ENCODE measurements at regions of chr1 and their contacts with region 1.

Region 1: DNA sequence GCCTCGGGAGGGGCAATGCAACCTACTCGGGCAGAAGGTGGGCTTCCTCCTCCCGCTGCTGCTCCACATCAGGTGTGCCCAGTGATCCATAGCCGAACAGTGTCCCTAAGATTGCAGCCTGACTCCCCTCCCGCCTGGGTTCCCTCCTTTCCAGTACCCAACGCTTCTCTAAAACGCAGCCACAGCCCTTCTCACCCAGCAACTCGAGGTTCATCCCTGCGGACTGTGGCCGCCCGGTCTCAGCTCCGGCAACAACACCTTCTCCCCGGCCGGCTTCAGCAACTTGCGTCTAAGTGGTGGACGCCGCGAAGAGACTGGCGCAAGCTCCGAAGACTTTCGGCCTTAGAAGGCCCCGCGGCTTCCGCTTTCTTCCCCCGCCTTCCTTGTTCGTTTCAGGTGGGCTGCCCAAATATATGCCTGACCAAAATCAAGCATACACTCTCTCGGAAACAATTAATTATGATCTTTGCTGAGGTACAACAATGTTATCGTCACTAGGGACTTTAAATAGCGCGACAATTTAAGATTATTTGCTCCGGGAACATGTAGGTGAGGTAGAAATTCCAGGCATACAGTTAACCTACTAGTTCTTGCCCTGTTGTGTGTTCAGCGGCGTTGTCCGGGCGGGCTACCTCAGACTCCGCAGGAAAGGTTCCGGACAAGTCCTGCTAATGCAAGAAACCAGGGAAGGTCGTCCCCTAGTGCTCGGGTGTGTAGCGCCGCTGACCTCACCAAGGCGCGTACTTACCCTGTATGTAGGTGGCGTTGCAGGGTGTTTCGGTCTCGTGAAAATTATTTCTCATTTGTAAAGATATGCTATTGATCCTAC is at the start of gene RBBP5:
- DNase-seq: peak; percentile 96
- H3K4me3 ChIP-seq: peak within 1 kb of the TSS; percentile 89 to 100 (median 97)
- H3K27ac ChIP-seq: peak within 1 kb of the TSS; percentile 98
- H3K4me1 ChIP-seq: peaks cover 0 to 9% (median 5%) of the 10 kb centered on the region in 4 experiments; a peak in 3 of 7 replicates
- H3K27me3 ChIP-seq: no peaks in the 10 kb centered on the region
- CTCF ChIP-seq: peak; percentile 85 to 91 (median 86)
- EP300 ChIP-seq: peak in 1 of 2 experiments; percentile 91; a peak in 1 of 3 replicates
- POLR2A ChIP-seq: peak; percentile 80 to 91
- RAD21 ChIP-seq: peak; percentile 55
- total RNA-seq, gene RBBP5: 20.4 and 21.5 TPM in 2 replicates

Region 2: GRCh38 chr1:205013683-205014367 is 108.0 kb before region 1 on chr1:
- CTCF ChIA-PET with region 1: no interaction called
- POLR2A ChIA-PET with region 1: no interaction called
- DNase-seq: no peak
- H3K4me3 ChIP-seq: no peak overlapping the region
- H3K27ac ChIP-seq: no peak overlapping the region
- H3K4me1 ChIP-seq: peaks cover 0 to 21% (median 7%) of the 10 kb centered on the region in 4 experiments; a peak in 5 of 7 replicates
- H3K27me3 ChIP-seq: no peaks in the 10 kb centered on the region
- CTCF ChIP-seq: no peak
- EP300 ChIP-seq: no peak
- POLR2A ChIP-seq: no peak
- RAD21 ChIP-seq: no peak

Region 3: GRCh38 chr1:205111354-205111753 is 10.5 kb before region 1 on chr1:
- CTCF ChIA-PET with region 1: interaction called, 4 read pairs
- POLR2A ChIA-PET with region 1: interaction called, 21 read pairs
- DNase-seq: no peak
- H3K4me3 ChIP-seq: no peak overlapping the region
- H3K27ac ChIP-seq: no peak overlapping the region
- H3K4me1 ChIP-seq: no peaks in the 10 kb centered on the region; a peak in 1 of 7 replicates
- H3K27me3 ChIP-seq: no peaks in the 10 kb centered on the region
- CTCF ChIP-seq: no peak
- EP300 ChIP-seq: no peak
- POLR2A ChIP-seq: no peak
- RAD21 ChIP-seq: no peak

Region 4: DNA sequence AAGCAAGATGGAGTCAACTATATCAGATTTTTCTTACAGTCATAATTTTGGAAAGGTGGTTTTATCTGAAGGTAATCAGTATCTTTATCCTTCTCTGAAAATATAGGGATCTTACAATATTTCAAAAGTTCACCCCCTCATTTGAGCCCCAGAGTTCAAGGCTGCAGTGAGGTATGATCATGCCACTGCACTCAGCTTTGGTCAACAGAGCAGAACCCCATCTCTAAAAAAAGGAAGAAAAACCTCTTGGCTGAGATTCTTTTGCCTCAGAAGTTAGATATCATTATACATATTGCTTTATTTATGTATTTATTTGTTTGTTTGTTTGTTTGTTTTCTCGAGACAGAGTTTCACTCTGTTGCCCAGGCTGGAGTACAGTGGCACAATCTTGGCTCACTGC is 11.4 kb after region 1 on chr1:
- CTCF ChIA-PET with region 1: interaction called, 46 read pairs
- POLR2A ChIA-PET with region 1: interaction called, 6 read pairs
- DNase-seq: no peak
- H3K4me3 ChIP-seq: no peak overlapping the region
- H3K27ac ChIP-seq: no peak overlapping the region
- H3K4me1 ChIP-seq: peaks cover 0 to under 1% (median 0%) of the 10 kb centered on the region in 4 experiments; a peak in 2 of 7 replicates
- H3K27me3 ChIP-seq: peaks cover 0 to 2% (median 0%) of the 10 kb centered on the region in 4 experiments; a peak in 1 of 7 replicates
- CTCF ChIP-seq: no peak
- EP300 ChIP-seq: no peak
- POLR2A ChIP-seq: no peak
- RAD21 ChIP-seq: no peak

Region 5: GRCh38 chr1:205141236-205142101 is 19.6 kb after region 1 on chr1:
- CTCF ChIA-PET with region 1: interaction called, 46 read pairs
- POLR2A ChIA-PET with region 1: interaction called, 6 read pairs
- DNase-seq: peak; percentile 57 to 87
- H3K4me3 ChIP-seq: no peak overlapping the region
- H3K27ac ChIP-seq: no peak overlapping the region
- H3K4me1 ChIP-seq: peaks cover 0 to 3% (median 1%) of the 10 kb centered on the region in 4 experiments; a peak in 2 of 7 replicates
- H3K27me3 ChIP-seq: no peaks in the 10 kb centered on the region
- CTCF ChIP-seq: peak; percentile 17 to 83 (median 79)
- EP300 ChIP-seq: no peak
- POLR2A ChIP-seq: no peak
- RAD21 ChIP-seq: peak; percentile 61 to 71

Region 6: GRCh38 chr1:205227584-205228006 is 105.7 kb after region 1 on chr1 and contains the start of gene TMCC2:
- CTCF ChIA-PET with region 1: interaction called, 15 read pairs
- POLR2A ChIA-PET with region 1: interaction called, 13 read pairs
- DNase-seq: peak; percentile 73 to 97
- H3K4me3 ChIP-seq: peak within 1 kb of the TSS; percentile 59 to 85 (median 73)
- H3K27ac ChIP-seq: no peak within 1 kb of the TSS
- H3K4me1 ChIP-seq: peaks cover 13 to 18% (median 16%) of the 10 kb centered on the region in 4 experiments; a peak in 6 of 7 replicates
- H3K27me3 ChIP-seq: peaks cover 0 to 6% (median 4%) of the 10 kb centered on the region in 4 experiments; a peak in 5 of 7 replicates
- CTCF ChIP-seq: no peak
- EP300 ChIP-seq: no peak
- POLR2A ChIP-seq: peak in 1 of 2 experiments; percentile 45; a peak in 1 of 3 replicates
- RAD21 ChIP-seq: no peak
- total RNA-seq, gene TMCC2: 6.7 and 7.2 TPM in 2 replicates

Measured in H1 (cell line).